ENCODE measurements at regions of chr3 and their contacts with region 1.

Region 1: DNA sequence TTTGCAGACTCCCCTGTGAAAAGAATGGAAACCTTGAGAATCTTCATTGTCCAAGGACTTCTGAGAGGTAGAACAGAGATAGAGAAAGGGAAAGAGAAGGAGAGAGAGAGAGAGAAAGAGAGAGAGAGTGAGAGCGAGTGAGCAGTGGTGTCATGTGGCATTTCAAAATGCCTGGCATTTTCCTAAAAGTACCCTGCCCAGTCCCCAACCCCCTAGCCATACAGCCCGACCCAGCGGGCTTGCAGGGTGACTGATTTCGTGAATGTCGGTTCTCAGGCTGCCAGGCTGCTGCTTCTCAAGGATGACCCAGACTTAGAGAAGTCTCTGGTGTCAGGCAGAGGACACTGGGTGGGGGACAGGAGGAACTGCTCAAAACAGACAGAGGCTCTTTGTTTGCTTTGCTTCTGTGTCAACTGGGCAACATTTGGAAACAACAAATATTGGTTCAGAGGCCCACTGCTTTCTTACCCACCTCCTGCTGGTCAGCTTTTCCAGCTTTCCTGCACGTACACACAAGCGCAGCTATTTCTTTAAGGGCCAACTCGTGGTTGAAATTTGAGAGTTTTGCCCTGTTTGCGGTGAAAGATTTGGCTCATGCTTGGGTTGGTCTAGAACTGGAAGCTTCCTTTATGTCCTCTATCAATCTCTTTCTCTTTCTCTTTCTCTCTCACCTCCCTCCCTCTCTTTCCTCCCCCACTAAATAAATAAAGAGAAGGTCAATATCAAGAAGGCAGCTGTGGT is 3.7 kb upstream of the TF start:
- DNase-seq: no peak
- ATAC-seq: peak in 1 of 2 donors; percentile 20

Region 2: DNA sequence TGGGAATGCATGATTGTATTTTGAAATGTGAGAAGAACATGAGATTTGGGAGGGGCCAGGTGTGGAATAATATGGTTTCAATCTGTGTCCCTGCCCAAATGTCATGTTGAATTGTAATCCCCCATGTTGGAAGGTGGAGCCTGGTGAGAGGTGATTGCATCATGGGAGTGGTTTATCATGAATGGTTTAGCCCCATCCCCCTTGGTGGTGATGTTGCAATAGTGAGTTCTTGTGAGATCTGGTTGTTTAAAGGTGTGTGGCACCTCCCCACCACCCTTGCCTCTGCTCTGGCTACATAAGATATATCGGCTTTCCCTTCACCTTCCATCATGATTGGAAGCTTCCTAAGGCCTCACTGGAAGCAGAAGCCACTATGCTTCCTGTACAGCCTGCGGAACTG is 728.2 kb before region 1 on chr3:
- intact Hi-C with region 1: no loop called
- DNase-seq: no peak
- ATAC-seq: no peak

Region 3: GRCh38 chr3:133943639-133944141 is 201.2 kb after region 1 on chr3:
- intact Hi-C with region 1: loop called in 1 of 2 experiments (anchors 5 kb)
- DNase-seq: no peak
- ATAC-seq: peak; percentile 39 to 50